CD4-positive, alpha-beta memory T cell (primary cell): ENCODE measurements at regions of chr15 and their contacts with region 1.

Region 1: GRCh38 chr15:41557673-41558399 is 1.2 kb upstream of the TYRO3 start:
- DNase-seq: peak; percentile 80 to 87 (median 84)
- H3K4me3 ChIP-seq: peak overlapping the region in 1 of 2 donors; percentile 32
- H3K4me3 Mint-ChIP-seq: peak overlapping the region; percentile 82 to 98 (median 89)
- H3K27ac ChIP-seq: peak overlapping the region; percentile 17
- H3K27ac Mint-ChIP-seq: peak overlapping the region; percentile 90 to 98 (median 93)
- H3K4me1 ChIP-seq: peaks cover 19% of the 10 kb centered on the region
- H3K4me1 Mint-ChIP-seq: peaks cover 8 to 30% (median 24%) of the 10 kb centered on the region in 4 donors
- H3K27me3 ChIP-seq: peaks cover 4% of the 10 kb centered on the region
- H3K27me3 Mint-ChIP-seq: peaks cover 0 to 9% of the 10 kb centered on the region in 2 donors

Region 2: DNA sequence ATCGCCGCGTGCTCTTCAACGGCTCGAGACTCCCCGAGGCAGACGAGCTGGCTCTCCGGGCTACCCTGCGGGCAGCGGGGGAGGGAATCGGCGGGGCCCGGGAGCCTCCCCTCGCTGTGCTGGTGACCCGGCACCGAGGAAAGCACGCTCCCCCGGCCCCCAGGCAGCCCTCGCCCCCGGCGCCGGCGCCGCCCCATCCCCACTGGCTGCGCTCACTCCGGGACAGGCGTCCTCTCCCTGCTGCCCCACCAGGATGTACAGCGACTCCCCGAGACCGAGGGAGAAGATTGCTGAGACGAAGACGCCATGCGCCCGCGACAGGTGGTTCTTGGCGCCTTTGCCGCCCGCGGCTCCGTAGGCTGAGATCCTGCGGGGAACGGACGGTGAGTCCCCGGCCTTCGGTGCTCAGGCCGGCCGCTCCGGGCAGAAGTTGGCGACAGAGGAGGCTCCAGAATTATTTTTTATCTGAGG is 45.9 kb before region 1 on chr15:
- CTCF ChIA-PET with region 1: no interaction called
- POLR2A ChIA-PET with region 1: no interaction called
- intact Hi-C with region 1: no loop called
- DNase-seq: peak in 2 of 5 donors; percentile 28 to 30
- H3K4me3 ChIP-seq: peak overlapping the region in 1 of 2 donors; percentile 52
- H3K4me3 Mint-ChIP-seq: peak overlapping the region; percentile 81 to 86 (median 83)
- H3K27ac ChIP-seq: no peak overlapping the region
- H3K27ac Mint-ChIP-seq: peak overlapping the region in 2 of 7 donors; percentile 6 to 65
- H3K4me1 ChIP-seq: peaks cover 27% of the 10 kb centered on the region
- H3K4me1 Mint-ChIP-seq: peaks cover 6 to 33% (median 24%) of the 10 kb centered on the region in 4 donors
- H3K27me3 ChIP-seq: peaks cover 17% of the 10 kb centered on the region
- H3K27me3 Mint-ChIP-seq: peaks cover 10 to 13% of the 10 kb centered on the region in 2 donors

Region 3: DNA sequence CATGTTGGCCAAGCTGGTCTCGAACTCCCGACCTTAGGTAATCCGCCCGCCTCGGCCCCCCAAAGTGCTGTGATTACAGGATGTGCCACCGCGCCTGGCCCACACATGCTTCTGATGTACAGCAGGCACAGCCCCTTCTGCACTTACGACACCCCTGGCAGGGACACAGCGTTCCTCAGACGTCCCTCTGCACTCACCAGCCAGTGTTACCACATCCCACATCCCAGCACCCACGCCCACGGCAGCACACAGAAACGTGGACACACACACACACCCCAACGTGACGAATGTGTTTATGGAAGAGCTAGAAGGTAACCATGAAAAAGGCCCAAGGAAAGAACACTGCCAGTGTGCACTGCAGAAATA is 13.2 kb before region 1 on chr15:
- CTCF ChIA-PET with region 1: interaction called, 32 read pairs
- POLR2A ChIA-PET with region 1: interaction called, 13 read pairs
- intact Hi-C with region 1: loop called (anchors 1 kb)
- DNase-seq: peak in 2 of 5 donors; percentile 7 to 17
- H3K4me3 ChIP-seq: peak overlapping the region in 1 of 2 donors; percentile 86
- H3K4me3 Mint-ChIP-seq: peak overlapping the region; percentile 94 to 97 (median 95)
- H3K27ac ChIP-seq: no peak overlapping the region
- H3K27ac Mint-ChIP-seq: peak overlapping the region; percentile 88 to 98 (median 95)
- H3K4me1 ChIP-seq: peaks cover 12% of the 10 kb centered on the region
- H3K4me1 Mint-ChIP-seq: peaks cover 10 to 27% (median 17%) of the 10 kb centered on the region in 4 donors
- H3K27me3 ChIP-seq: no peaks in the 10 kb centered on the region
- H3K27me3 Mint-ChIP-seq: no peaks in the 10 kb centered on the region

Region 4: GRCh38 chr15:41603941-41604911 is 46.4 kb after region 1 on chr15:
- CTCF ChIA-PET with region 1: interaction called, 27 read pairs
- POLR2A ChIA-PET with region 1: interaction called, 3 read pairs
- intact Hi-C with region 1: loop called (anchors 5 kb)
- DNase-seq: peak; percentile 53 to 58 (median 53)
- H3K4me3 ChIP-seq: peak overlapping the region in 1 of 2 donors; percentile 36
- H3K4me3 Mint-ChIP-seq: peak overlapping the region; percentile 49 to 87 (median 78)
- H3K27ac ChIP-seq: no peak overlapping the region
- H3K27ac Mint-ChIP-seq: peak overlapping the region in 1 of 7 donors; percentile 68
- H3K4me1 ChIP-seq: peaks cover 6% of the 10 kb centered on the region
- H3K4me1 Mint-ChIP-seq: peaks cover 8 to 10% (median 9%) of the 10 kb centered on the region in 4 donors
- H3K27me3 ChIP-seq: peaks cover 3% of the 10 kb centered on the region
- H3K27me3 Mint-ChIP-seq: peaks cover 13 to 15% of the 10 kb centered on the region in 2 donors

Region 5: DNA sequence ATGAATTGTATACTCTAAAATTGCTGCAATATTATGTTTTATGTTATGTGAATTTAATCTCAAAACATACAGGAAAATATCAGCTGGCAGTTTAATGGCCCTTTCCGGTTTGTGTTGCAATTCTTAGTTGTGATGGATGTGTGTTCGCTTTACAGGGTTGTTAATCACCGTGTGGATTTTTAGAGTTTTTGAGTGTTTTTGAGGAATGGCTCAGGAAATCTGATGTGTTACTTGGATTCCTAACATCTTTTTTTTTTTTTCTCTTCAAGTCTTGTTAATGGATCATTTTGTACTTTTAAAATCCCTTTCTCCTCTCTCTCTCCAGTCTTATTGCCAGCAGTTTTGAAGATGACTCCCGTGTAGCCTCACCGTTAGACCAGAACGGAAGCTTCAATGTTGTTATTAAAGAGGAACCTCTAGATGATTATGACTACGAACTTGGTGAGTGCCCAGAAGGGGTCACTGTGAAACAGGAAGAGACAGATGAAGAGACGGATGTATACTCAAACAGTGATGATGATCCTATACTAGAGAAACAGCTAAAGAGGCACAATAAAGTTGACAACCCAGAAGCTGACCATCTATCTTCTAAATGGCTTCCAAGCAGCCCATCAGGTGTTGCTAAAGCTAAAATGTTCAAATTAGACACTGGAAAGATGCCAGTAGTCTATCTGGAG is 138.1 kb after region 1 on chr15:
- CTCF ChIA-PET with region 1: interaction called, 4 read pairs
- POLR2A ChIA-PET with region 1: interaction called, 6 read pairs
- intact Hi-C with region 1: loop called (anchors 10 kb)
- DNase-seq: peak; percentile 45 to 67 (median 52)
- H3K4me3 ChIP-seq: no peak overlapping the region
- H3K4me3 Mint-ChIP-seq: peak overlapping the region; percentile 2 to 73 (median 54)
- H3K27ac ChIP-seq: peak overlapping the region; percentile 11
- H3K27ac Mint-ChIP-seq: peak overlapping the region; percentile 6 to 92 (median 77)
- H3K4me1 ChIP-seq: peaks cover 23% of the 10 kb centered on the region
- H3K4me1 Mint-ChIP-seq: peaks cover 34 to 54% (median 44%) of the 10 kb centered on the region in 4 donors
- H3K27me3 ChIP-seq: no peaks in the 10 kb centered on the region
- H3K27me3 Mint-ChIP-seq: no peaks in the 10 kb centered on the region

Region 6: DNA sequence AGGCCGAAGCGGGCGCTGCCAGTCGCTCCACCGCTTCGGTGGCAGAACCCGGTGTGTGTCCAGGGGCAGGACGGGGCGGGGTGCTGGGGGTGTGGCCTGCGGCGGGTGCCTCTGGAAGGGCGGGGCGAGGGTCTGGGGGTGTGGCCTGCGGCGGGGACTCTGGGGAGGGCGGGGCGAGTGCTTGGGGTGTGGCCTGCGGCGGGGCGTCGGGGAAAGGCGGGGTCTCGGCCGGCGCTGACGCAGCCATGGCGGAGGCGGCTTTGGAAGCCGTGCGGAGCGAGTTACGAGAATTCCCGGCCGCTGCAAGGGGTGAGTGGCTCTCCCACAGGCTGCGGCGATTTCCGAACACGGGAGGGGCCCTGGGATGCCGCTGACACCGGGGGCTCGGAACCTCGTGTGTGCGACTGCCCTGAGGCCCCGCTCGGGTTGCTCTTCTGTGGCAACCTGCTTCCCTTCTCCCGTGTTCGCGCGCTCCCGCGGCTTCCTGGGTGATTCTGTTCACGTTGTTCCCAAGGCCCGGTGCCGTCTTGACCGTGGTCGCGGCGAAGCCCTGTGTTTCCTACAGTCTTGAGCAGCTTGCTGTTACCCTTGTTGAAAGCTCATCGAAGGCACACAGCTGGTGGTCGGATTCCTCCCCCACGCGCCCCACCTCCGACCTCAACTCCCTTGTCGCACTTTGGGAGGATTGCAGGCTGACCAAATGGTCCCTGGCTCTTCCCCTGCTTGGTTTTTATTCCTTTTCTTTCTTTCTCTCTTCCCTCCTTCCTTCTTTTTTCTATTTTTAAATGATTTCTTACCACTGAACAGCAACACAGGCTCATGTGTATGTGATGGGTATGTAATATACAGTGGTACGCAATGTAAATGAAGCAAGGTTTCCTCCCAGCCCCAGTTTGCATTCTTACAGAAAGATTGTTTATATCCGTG is 270.3 kb after region 1 on chr15 and contains the start of gene JMJD7:
- CTCF ChIA-PET with region 1: interaction called, 3 read pairs
- POLR2A ChIA-PET with region 1: no interaction called
- intact Hi-C with region 1: loop called (anchors 5 kb)
- DNase-seq: peak; percentile 88 to 92 (median 89)
- H3K4me3 ChIP-seq: peak within 1 kb of the TSS; percentile 94 to 95
- H3K4me3 Mint-ChIP-seq: peak within 1 kb of the TSS; percentile 91 to 99 (median 94)
- H3K27ac ChIP-seq: peak within 1 kb of the TSS; percentile 74
- H3K27ac Mint-ChIP-seq: peak within 1 kb of the TSS; percentile 83 to 98 (median 95)
- H3K4me1 ChIP-seq: peaks cover 48% of the 10 kb centered on the region
- H3K4me1 Mint-ChIP-seq: peaks cover 30 to 54% (median 43%) of the 10 kb centered on the region in 4 donors
- H3K27me3 ChIP-seq: no peaks in the 10 kb centered on the region
- H3K27me3 Mint-ChIP-seq: no peaks in the 10 kb centered on the region
- total RNA-seq, gene JMJD7: 75.0 to 78.5 TPM